Naive thymus-derived CD4-positive, alpha-beta T cell (primary cell): ENCODE measurements at regions of chr14 and their contacts with region 1.

Region 1: DNA sequence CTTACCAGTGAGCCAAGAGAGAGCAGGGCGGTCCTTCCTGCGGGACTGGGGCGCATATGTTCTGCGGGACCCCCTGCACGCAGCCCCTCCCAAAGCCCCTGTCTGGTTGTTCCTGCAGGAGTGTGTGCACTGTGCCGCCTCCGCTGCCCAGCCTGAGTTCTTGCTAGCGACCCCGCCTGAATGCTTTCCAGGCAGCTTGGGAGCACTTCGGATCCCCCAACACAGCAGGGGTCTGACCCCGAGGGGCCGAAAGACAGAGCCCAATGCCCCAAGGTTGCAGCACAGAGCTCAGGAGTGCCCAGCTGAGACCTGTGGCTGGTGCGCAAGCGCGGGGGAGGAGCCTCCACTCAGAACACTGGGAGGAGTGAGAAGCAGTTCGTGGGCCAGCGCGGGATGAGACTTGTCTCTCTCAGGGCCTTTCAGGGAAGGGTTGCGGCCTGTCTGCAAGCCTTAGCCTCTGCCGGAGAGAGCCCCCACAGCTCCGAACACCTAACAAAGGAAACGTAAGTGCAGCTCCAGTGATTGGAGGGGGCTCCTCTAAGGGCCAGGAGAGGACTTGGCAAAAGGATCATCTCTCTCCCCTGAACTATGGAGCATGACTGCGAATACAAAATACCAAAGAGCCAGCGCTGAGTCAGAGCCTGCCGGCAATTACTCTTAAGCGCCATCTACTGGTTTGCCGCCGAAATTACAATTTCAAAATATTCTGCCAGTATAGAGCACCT is 50.5 kb downstream of the GTF2A1 start:
- DNase-seq: peak; percentile 76 to 91 (median 89)
- ATAC-seq: peak; percentile 98
- H3K4me3 ChIP-seq: peak overlapping the region; percentile 79
- H3K4me3 Mint-ChIP-seq: peak overlapping the region; percentile 87 to 98 (median 93)
- H3K27ac ChIP-seq: peak overlapping the region; percentile 54
- H3K27ac Mint-ChIP-seq: peak overlapping the region; percentile 71 to 96 (median 92)
- H3K4me1 ChIP-seq: peaks cover 8 to 17% of the 10 kb centered on the region in 2 donors
- H3K4me1 Mint-ChIP-seq: peaks cover 11 to 46% (median 24%) of the 10 kb centered on the region in 7 donors
- H3K27me3 ChIP-seq: no peaks in the 10 kb centered on the region
- H3K27me3 Mint-ChIP-seq: no peaks in the 10 kb centered on the region

Region 2: DNA sequence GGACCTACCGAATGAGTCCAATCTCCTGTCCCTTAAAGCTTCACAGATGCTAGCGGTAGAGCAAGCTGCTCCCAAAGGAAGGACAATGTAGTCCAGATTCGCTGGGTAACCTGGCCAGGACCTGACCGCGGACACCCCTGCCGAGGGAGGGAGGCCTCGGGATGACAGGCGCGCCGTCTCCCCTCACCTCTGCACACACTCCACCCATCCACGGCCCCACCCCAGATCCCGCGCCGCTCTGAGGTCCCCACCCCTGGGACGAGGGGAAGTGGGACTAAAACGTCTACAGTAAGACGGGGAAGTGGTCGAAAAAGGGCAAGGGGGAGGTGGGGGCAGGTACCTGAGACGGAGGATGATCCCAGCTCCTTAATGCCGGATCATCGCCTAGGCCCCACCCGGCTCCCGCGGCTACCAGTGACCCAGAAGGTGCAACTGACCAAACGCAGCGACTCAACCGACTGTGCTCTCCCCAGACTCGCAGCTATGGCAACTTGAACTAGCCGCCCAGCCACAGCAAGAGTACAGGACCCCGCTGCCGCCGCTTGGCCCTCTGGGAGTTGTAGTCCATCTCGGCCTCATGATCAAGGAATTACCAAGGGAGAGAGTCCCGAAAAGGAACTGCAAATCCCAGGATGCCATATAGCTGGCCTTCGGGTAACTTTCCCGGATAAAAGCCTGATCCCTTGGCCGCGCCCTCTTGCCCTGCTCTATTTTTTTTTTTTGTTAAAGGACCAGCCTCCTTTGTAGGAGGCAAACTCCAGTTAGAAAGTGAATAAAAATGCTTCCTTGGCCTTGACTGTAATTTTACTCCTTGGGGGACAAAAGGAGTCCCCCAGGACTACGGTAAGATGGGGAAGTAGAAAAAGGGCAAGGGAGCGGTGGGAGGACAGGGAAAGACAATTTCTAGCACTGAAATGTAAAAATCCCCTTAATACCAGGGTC is 228.8 kb before region 1 on chr14 and contains the start of gene CEP128:
- CTCF ChIA-PET with region 1: no interaction called
- POLR2A ChIA-PET with region 1: no interaction called
- intact Hi-C with region 1: loop called (anchors 1 kb)
- DNase-seq: peak; percentile 30 to 82 (median 61)
- ATAC-seq: peak; percentile 93
- H3K4me3 ChIP-seq: peak within 1 kb of the TSS; percentile 78
- H3K4me3 Mint-ChIP-seq: peak within 1 kb of the TSS; percentile 84 to 93 (median 89)
- H3K27ac ChIP-seq: peak within 1 kb of the TSS; percentile 44
- H3K27ac Mint-ChIP-seq: peak within 1 kb of the TSS; percentile 52 to 89 (median 78)
- H3K4me1 ChIP-seq: peaks cover 10 to 11% of the 10 kb centered on the region in 2 donors
- H3K4me1 Mint-ChIP-seq: peaks cover 18 to 33% (median 20%) of the 10 kb centered on the region in 7 donors
- H3K27me3 ChIP-seq: no peaks in the 10 kb centered on the region
- H3K27me3 Mint-ChIP-seq: peaks cover 0 to 6% (median 4%) of the 10 kb centered on the region in 5 donors
- total RNA-seq, gene CEP128: 7.7 to 22.8 (median 10.1) TPM

Region 3: DNA sequence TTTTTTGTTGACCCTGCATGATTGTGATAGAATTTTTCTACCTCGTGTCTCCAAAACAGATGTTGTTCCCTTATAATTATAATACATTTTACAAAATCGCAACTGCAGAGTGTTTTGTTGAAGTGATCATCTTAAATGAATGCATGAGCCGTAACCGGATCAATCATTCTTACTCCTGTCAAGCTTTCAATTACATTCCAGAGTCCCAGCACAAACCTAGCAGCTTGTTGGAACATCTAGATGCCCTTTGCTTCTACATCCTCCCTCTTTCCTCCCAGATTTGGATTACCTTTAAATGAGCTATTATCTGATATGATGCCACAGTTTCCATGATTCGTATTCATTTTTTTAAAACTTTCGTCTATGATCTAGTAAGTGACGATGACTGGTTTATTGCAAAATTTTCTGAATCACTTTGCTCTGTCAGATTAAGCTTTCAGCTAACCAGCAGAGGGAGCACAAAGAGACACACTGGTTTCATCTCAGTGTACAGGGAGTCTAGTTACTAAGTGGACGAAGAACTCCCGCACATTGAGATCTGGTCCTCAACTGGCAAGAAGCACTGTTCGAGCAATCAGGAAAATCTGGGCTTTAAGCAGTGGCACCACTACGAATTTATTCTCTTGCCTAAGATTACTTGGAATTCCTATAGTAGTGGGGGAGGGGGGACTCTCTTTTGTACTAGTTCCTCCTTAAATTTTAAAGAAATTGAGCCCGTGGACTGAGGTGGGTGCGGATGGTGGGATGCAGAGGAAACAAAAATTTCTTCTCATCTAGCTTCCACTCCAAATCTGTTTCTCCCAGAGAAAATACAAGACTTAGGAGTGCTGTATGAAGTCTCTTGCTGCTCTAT is 174.0 kb before region 1 on chr14:
- CTCF ChIA-PET with region 1: interaction called, 31 read pairs
- POLR2A ChIA-PET with region 1: no interaction called
- intact Hi-C with region 1: loop called (anchors 1 kb)
- DNase-seq: peak in 6 of 9 donors; percentile 27 to 55 (median 34)
- ATAC-seq: peak; percentile 87
- H3K4me3 ChIP-seq: no peak overlapping the region
- H3K4me3 Mint-ChIP-seq: no peak overlapping the region
- H3K27ac ChIP-seq: no peak overlapping the region
- H3K27ac Mint-ChIP-seq: peak overlapping the region in 1 of 9 donors; percentile 4
- H3K4me1 ChIP-seq: no peaks in the 10 kb centered on the region
- H3K4me1 Mint-ChIP-seq: peaks cover 0 to 8% (median 4%) of the 10 kb centered on the region in 7 donors
- H3K27me3 ChIP-seq: no peaks in the 10 kb centered on the region
- H3K27me3 Mint-ChIP-seq: peaks cover 26 to 59% (median 37%) of the 10 kb centered on the region in 5 donors

Region 4: DNA sequence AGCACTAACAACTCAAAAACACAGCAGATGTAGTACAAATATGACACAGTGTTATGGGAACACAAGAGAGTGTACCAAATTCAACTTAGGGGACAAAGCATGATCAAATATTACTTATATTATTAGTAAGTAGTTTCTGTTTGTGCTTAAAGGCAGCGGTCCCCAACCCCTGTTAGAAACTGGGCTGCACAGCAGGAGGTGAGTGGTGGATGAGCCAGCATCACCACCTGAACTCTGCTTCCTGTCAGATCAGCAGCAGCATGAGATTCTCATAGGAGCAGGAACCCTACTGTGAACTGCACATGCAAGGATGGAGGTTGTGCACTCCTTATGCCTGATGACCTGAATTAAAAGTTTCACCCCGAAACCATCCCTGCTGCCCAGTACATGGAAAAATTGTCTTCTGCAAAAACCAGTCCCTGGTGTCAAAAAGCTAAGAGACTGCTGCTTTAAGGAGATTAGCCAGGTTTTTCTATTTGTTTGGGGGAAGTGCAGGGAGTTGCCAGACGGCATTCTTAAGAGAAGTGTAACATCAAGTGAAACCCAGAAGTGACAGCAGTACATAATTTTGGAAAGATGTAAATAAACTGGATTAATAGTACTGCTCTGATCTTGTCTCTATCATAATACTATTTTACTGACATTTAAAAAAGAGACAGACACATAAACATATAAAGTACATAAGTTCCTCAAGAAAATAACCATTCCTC is 23.8 kb after region 1 on chr14:
- CTCF ChIA-PET with region 1: interaction called, 3 read pairs
- POLR2A ChIA-PET with region 1: interaction called, 3 read pairs
- intact Hi-C with region 1: loop called in 1 of 2 experiments (anchors 2 kb)
- DNase-seq: no peak
- ATAC-seq: no peak
- H3K4me3 ChIP-seq: no peak overlapping the region
- H3K4me3 Mint-ChIP-seq: peak overlapping the region in 1 of 10 donors; percentile 29
- H3K27ac ChIP-seq: no peak overlapping the region
- H3K27ac Mint-ChIP-seq: peak overlapping the region in 6 of 9 donors; percentile 15 to 83 (median 52)
- H3K4me1 ChIP-seq: peaks cover 16 to 17% of the 10 kb centered on the region in 2 donors
- H3K4me1 Mint-ChIP-seq: peaks cover 24 to 71% (median 41%) of the 10 kb centered on the region in 7 donors
- H3K27me3 ChIP-seq: no peaks in the 10 kb centered on the region
- H3K27me3 Mint-ChIP-seq: no peaks in the 10 kb centered on the region

Region 5: DNA sequence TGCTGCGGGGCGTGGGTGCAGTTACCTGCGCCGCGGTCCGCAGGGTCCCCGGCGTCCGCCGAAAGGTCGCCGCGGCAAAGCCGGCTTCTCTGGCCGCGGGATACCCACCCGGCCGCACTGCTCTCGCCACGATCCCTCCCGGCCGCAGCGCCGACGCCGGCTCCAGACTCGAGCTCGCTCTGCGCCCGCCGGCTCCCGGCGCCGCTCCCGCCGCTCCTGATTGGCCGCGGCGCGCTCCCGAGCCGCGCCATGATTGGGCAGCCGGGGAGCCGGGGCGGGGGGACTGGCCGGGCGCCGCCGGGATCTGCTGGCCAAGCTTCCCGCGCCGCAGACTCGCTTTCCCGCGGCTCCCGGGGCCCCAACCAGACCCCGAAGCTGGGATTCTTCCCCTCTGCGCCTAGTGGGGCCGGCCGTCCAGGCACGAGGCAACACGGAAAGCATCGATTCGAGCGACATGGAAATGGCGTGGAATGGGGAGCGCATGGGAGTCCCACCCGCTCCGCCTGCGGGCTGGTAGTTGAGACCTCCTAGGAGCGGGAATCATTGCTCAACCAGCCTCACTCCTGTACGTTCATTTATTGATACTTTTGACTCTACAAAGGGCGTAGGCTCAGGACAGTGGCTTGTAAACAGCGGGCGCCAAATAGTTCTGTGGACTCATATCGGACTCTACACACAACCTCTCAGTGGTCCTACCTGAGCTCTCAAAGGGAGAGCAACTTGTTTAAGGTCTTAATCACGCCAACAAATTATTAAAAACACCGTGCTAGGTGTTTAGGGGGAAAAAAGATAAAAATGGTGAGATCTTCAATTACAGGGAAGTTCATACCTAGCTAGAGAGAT is 266.3 kb after region 1 on chr14:
- CTCF ChIA-PET with region 1: no interaction called
- POLR2A ChIA-PET with region 1: no interaction called
- intact Hi-C with region 1: loop called in 1 of 2 experiments (anchors 1 kb)
- DNase-seq: peak in 7 of 9 donors; percentile 2 to 62 (median 19)
- ATAC-seq: peak; percentile 81
- H3K4me3 ChIP-seq: peak overlapping the region; percentile 48
- H3K4me3 Mint-ChIP-seq: peak overlapping the region; percentile 41 to 89 (median 78)
- H3K27ac ChIP-seq: no peak overlapping the region
- H3K27ac Mint-ChIP-seq: no peak overlapping the region
- H3K4me1 ChIP-seq: peaks cover 7% of the 10 kb centered on the region in 2 donors
- H3K4me1 Mint-ChIP-seq: peaks cover 6 to 16% (median 15%) of the 10 kb centered on the region in 7 donors
- H3K27me3 ChIP-seq: peaks cover 7 to 23% of the 10 kb centered on the region in 2 donors
- H3K27me3 Mint-ChIP-seq: peaks cover 72 to 85% (median 78%) of the 10 kb centered on the region in 5 donors

Region 6: DNA sequence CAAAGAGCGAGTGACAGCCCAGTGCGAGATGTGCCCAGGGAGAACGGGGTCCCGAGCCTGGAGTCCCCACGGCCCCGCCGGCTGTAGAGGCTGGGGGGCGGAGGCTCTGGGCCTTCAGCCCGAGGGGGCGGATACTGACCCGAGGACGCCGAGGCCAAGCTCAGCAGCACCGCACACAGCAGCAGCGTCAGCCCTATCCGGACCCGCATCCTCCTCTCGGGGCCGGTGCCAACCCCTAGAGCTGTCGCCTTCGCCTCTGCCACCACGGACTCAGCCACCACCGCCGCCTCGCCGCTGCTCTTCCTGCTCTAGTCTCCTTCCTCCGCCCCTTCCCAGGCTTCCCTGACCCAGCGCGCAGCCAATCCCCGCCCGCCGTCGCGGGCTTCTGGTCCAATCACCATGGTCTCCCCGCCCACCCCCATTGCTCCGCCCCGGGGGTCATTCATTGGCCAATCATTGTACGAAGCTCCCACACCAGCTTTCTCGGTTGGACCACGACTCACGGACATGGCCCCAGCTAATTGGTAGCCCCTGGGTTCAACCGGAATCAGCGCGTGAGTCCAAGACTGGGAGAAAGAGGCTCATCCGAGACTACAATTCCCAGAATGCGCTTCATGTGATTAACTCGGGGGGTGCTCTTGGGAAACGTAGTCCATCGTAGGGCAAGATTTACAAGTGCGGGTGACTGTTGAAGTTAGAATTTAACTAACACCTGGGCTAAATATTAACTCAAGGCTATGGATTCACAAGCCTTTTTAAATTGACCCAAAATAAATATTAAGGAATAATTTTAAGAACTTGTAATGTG is 363.5 kb after region 1 on chr14 and contains the start of gene SEL1L:
- CTCF ChIA-PET with region 1: no interaction called
- POLR2A ChIA-PET with region 1: no interaction called
- intact Hi-C with region 1: loop called (anchors 1 kb)
- DNase-seq: peak; percentile 98 to 100 (median 99)
- ATAC-seq: peak; percentile 96
- H3K4me3 ChIP-seq: peak within 1 kb of the TSS; percentile 87
- H3K4me3 Mint-ChIP-seq: peak within 1 kb of the TSS; percentile 85 to 98 (median 96)
- H3K27ac ChIP-seq: peak within 1 kb of the TSS; percentile 77
- H3K27ac Mint-ChIP-seq: peak within 1 kb of the TSS; percentile 81 to 97 (median 92)
- H3K4me1 ChIP-seq: peaks cover 24% of the 10 kb centered on the region in 2 donors
- H3K4me1 Mint-ChIP-seq: peaks cover 33 to 71% (median 68%) of the 10 kb centered on the region in 7 donors
- H3K27me3 ChIP-seq: no peaks in the 10 kb centered on the region
- H3K27me3 Mint-ChIP-seq: peaks cover 0 to 3% (median under 1%) of the 10 kb centered on the region in 5 donors
- total RNA-seq, gene SEL1L: 43.5 to 72.2 (median 57.0) TPM